Activated CD4-positive, alpha-beta T cell treated with anti-CD3 and anti-CD28 coated beads for 36 hours (primary cell): ENCODE measurements at regions of chr1 and their contacts with region 1.

Region 1: DNA sequence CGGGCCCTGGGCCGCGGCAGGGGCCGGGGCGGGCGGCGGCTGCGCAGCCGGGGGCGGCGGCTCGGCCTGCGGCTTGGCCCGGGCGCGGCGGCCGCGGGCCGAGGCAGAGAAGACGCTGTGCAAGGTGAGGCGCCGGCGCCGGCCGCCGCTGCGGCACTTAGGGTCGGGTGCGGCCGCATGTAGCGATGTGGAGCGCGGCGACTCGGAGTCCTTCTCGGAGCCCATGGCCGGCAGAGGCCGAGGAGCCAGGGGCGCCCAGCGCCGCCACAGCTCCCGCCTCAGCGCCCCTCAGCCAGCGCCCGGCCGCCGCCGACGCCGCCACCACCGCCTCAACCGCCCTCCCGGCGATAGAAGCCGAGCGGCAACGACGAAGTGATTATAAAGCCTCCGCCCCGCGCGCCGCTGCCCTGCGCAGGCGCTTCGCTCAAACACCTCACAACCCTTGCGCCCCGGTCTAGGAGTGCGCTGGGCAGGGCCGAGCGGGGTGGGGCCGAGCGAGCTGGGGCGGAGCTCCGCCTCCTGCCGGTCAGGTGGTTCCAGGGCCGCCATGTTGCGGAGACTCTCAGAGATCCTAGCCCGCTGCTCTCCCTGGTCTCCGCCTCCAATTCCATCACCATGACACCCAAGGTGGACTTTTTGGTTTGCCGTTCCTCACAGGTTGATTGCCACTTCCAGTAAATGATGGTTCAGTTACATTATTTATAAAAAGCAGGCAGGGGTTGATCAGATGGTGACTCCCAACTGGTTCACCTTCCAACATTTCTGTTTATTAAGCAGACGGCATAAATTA is at the start of gene RNF19B:
- DNase-seq: peak; percentile 98
- ATAC-seq: peak; percentile 96
- H3K4me3 Mint-ChIP-seq: peak within 1 kb of the TSS; percentile 77
- H3K27ac Mint-ChIP-seq: peak within 1 kb of the TSS; percentile 84
- H3K4me1 Mint-ChIP-seq: peaks cover 59% of the 10 kb centered on the region
- H3K27me3 Mint-ChIP-seq: peaks cover 5% of the 10 kb centered on the region
- total RNA-seq, gene RNF19B: 22.5 to 23.9 TPM

Region 2: DNA sequence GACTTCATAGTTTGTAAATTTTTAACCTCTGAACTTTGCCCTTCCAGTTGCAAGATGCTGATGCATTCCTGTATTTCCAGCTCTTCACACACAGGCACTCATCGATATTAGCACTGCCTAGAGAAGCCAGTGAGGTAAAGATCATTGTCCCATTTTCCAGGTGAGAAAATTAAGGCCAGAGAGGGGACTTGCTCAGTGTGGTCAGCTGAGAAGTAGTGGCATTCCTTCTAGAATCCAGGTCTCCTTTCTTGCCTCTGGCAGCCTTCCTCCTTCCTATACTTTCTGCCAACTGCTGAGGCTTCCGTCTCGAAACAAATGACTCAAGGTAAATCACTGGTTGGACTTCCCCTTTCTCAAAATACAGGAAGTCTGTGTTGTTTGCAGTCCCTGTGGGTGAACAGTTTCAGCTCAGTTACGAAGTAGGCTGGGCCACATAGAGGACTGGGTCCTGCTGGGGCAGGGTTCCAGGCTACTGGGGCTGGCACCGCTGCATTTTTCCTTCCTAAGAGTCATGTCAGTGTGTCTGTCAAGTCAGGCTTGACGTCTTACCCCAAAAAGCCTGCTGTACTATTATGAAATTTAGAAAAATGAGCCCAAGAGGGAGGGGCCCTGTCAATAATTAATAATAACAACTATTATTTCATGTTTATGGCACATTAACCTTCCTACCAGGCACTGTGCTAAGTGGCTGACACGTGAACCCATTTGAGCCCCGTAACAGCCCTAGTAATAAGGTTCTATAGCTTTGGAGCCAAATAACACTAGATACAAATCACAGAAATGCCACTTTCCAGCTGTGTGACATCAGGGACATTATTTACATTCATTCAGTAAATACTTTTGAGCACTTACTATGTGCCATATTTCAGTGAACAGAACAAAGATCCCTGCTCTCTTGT is 16.6 kb after region 1 on chr1:
- CTCF ChIA-PET with region 1: interaction called, 12 read pairs
- POLR2A ChIA-PET with region 1: interaction called, 26 read pairs
- intact Hi-C with region 1: loop called (anchors 1 kb)
- DNase-seq: peak; percentile 78
- ATAC-seq: peak; percentile 94
- H3K4me3 Mint-ChIP-seq: peak overlapping the region; percentile 37
- H3K27ac Mint-ChIP-seq: peak overlapping the region; percentile 84
- H3K4me1 Mint-ChIP-seq: peaks cover 58% of the 10 kb centered on the region
- H3K27me3 Mint-ChIP-seq: no peaks in the 10 kb centered on the region

Region 3: GRCh38 chr1:33007190-33008050 is 42.8 kb after region 1 on chr1:
- CTCF ChIA-PET with region 1: interaction called, 3 read pairs
- POLR2A ChIA-PET with region 1: no interaction called
- intact Hi-C with region 1: loop called in 1 of 2 experiments (anchors 5 kb)
- DNase-seq: peak; percentile 29
- ATAC-seq: peak; percentile 23
- H3K4me3 Mint-ChIP-seq: no peak overlapping the region
- H3K27ac Mint-ChIP-seq: no peak overlapping the region
- H3K4me1 Mint-ChIP-seq: peaks cover 15% of the 10 kb centered on the region
- H3K27me3 Mint-ChIP-seq: no peaks in the 10 kb centered on the region

Region 4: GRCh38 chr1:33036526-33037503 is 72.2 kb after region 1 on chr1 and contains the start of gene AK2:
- CTCF ChIA-PET with region 1: no interaction called
- POLR2A ChIA-PET with region 1: no interaction called
- intact Hi-C with region 1: loop called (anchors 1 kb)
- DNase-seq: peak; percentile 96
- ATAC-seq: peak; percentile 100
- H3K4me3 Mint-ChIP-seq: peak within 1 kb of the TSS; percentile 96
- H3K27ac Mint-ChIP-seq: peak within 1 kb of the TSS; percentile 87
- H3K4me1 Mint-ChIP-seq: peaks cover 41% of the 10 kb centered on the region
- H3K27me3 Mint-ChIP-seq: no peaks in the 10 kb centered on the region
- total RNA-seq, gene AK2: 386 to 464 TPM

Region 5: GRCh38 chr1:33080885-33081553 is 116.4 kb after region 1 on chr1 and contains the start of gene AZIN2:
- CTCF ChIA-PET with region 1: no interaction called
- POLR2A ChIA-PET with region 1: no interaction called
- intact Hi-C with region 1: loop called in 1 of 2 experiments (anchors 1 kb)
- DNase-seq: peak; percentile 98
- ATAC-seq: peak; percentile 100
- H3K4me3 Mint-ChIP-seq: peak within 1 kb of the TSS; percentile 61
- H3K27ac Mint-ChIP-seq: peak within 1 kb of the TSS; percentile 43
- H3K4me1 Mint-ChIP-seq: peaks cover 17% of the 10 kb centered on the region
- H3K27me3 Mint-ChIP-seq: peaks cover 3% of the 10 kb centered on the region
- total RNA-seq, gene AZIN2: 0.98 to 2.1 TPM

Region 6: DNA sequence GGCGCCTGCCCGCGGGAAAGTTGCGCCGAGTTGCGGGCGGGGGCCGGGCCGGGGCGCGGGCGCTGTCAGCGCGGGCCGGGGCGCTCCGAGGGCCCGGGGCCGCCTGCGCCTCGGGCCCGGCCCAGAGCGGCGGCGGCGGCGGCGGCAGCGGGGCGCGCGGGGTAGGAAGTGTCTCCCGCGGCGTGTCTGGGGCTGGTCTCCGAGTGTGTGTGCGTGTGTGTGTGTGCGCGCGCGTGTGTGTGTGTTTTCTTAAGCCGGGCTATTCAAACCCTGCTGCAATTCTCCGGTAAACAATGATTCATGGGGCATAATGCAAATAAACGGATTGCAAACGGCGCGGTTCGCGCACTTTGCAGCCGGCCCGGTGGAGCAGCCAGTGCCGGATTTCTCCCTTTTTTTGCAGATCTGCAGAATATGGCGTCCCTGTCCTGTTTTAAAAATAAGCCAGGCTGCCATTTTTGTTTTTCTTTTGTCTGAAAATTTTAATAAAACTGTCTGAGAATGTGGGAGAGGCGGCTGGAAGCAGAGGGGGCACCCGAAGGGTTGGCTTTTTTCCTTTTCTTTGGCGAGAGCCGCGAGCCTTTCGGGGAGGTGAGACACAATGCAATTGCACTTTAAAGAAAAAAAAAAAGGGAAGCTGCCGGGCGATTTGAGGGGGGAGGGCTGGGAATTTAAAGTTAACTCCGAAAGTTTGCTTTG is 292.2 kb after region 1 on chr1:
- CTCF ChIA-PET with region 1: no interaction called
- POLR2A ChIA-PET with region 1: no interaction called
- intact Hi-C with region 1: loop called in 1 of 2 experiments (anchors 2 kb)
- DNase-seq: peak; percentile 72
- ATAC-seq: peak; percentile 50
- H3K4me3 Mint-ChIP-seq: peak overlapping the region; percentile 95
- H3K27ac Mint-ChIP-seq: peak overlapping the region; percentile 98
- H3K4me1 Mint-ChIP-seq: peaks cover 39% of the 10 kb centered on the region
- H3K27me3 Mint-ChIP-seq: no peaks in the 10 kb centered on the region

Region 7: DNA sequence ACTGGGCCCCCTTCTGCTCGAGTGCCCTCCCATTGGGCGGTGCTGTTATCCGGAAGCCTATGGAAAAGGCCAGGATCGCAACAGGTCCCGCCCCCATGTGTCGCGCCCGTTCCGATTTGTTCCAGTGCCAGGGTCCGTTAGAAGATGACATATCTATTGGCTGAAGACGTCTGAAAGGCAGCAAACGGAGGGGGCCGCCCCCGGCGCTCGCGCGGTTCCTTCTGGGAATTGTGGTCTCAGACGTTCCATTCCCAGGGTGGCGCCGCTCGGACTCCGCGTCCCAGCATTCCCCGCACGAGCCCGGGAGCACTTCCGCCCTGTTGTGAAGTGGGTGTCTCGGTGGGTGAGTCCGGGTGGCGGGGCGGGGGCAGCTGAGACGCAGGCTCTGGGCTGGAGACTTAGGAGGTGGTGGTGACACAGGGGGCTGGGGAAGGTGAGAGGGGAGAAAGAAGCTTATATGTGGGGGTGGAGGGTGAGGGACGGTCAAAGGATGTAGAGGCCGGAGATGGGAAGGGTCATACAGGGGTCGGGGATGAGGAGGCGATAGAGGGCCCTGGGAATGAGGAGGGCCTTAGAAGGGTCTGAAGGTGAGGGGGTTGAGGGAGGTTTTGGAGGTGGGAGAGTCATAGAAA is 507.8 kb after region 1 on chr1 and contains the start of gene ZSCAN20:
- CTCF ChIA-PET with region 1: no interaction called
- POLR2A ChIA-PET with region 1: no interaction called
- intact Hi-C with region 1: loop called in 1 of 2 experiments (anchors 1 kb)
- DNase-seq: peak; percentile 94
- ATAC-seq: peak; percentile 97
- H3K4me3 Mint-ChIP-seq: peak within 1 kb of the TSS; percentile 81
- H3K27ac Mint-ChIP-seq: peak within 1 kb of the TSS; percentile 71
- H3K4me1 Mint-ChIP-seq: peaks cover 23% of the 10 kb centered on the region
- H3K27me3 Mint-ChIP-seq: no peaks in the 10 kb centered on the region
- total RNA-seq, gene ZSCAN20: 3.4 to 5.4 TPM